ENCODE measurements at regions of chr17 and their contacts with region 1.

Region 1: GRCh38 chr17:58658804-58659713 is 32.8 kb downstream of the TEX14 start:
- DNase-seq: peak; percentile 41 to 79
- ATAC-seq: peak; percentile 96 to 99
- H3K4me3 ChIP-seq: peak overlapping the region; percentile 55 to 66 (median 61)
- H3K27ac ChIP-seq: peak overlapping the region; percentile 65 to 80 (median 79)
- H3K4me1 ChIP-seq: no peaks in the 10 kb centered on the region
- H3K27me3 ChIP-seq: no peaks in the 10 kb centered on the region
- CTCF ChIP-seq: peak in 1 of 5 experiments; percentile 41
- POLR2A ChIP-seq: peak; percentile 94 to 98

Region 2: GRCh38 chr17:58249270-58250133 is 409.6 kb before region 1 on chr17:
- in situ Hi-C with region 1: no loop called
- intact Hi-C with region 1: no loop called
- DNase-seq: peak; percentile 29 to 39
- ATAC-seq: peak; percentile 74 to 89
- H3K4me3 ChIP-seq: peak overlapping the region; percentile 46 to 62 (median 50)
- H3K27ac ChIP-seq: no peak overlapping the region
- H3K4me1 ChIP-seq: peaks cover 0 to 10% of the 10 kb centered on the region in 2 donors
- H3K27me3 ChIP-seq: peaks cover 9 to 16% (median 9%) of the 10 kb centered on the region in 3 donors
- CTCF ChIP-seq: peak; percentile 58 to 94 (median 86)
- POLR2A ChIP-seq: no peak

Region 3: GRCh38 chr17:58800240-58800908 is 141.3 kb after region 1 on chr17:
- in situ Hi-C with region 1: no loop called
- intact Hi-C with region 1: no loop called
- DNase-seq: no peak
- ATAC-seq: no peak
- H3K4me3 ChIP-seq: no peak overlapping the region
- H3K27ac ChIP-seq: no peak overlapping the region
- H3K4me1 ChIP-seq: no peaks in the 10 kb centered on the region
- H3K27me3 ChIP-seq: no peaks in the 10 kb centered on the region
- CTCF ChIP-seq: no peak
- POLR2A ChIP-seq: no peak

Region 4: DNA sequence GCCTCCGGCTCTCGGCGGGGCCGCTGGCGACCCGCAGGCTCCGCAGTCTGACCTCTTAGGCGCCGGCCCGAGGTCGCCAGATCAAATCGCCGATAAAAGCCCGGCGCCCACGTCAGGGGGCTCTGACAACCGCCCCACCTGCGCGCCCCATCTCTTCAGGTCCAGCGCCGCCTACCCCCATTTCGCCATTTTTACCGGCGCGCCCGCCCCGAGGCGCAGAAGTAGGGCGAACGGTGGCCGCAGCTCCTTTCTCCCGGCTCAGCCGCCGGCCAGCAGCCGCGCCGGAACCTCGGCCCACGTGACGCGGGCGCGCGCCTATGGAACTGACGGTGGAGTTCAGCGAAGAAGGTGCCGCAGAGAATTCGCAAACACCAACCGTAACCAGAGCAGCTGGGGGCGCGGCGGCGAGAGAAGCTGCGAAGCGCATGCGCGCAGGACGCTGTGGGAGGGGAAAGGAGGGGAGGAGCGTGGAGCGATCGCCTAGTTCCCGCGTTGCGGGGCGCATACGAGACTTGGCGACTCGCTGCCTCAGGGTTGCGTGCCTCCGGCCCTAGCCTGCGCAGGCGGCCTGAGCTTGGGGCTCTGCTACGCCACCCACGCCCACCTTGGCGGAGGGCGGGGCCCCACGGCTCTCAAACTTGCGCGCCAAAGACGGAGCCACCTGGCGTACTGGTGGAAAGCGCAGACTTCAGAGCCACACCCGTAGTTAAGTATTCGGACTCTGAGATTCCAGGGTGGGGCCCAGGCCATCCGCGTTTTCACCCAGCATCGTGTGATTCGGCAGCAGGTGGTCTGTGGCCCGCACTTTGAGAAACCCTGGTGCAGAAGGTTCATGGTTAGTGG is 447.6 kb after region 1 on chr17 and contains the start of gene TRIM37:
- in situ Hi-C with region 1: no loop called
- intact Hi-C with region 1: loop called (anchors 5 kb)
- DNase-seq: peak; percentile 96 to 97
- ATAC-seq: peak; percentile 98 to 99
- H3K4me3 ChIP-seq: peak within 1 kb of the TSS; percentile 67 to 99 (median 91)
- H3K27ac ChIP-seq: peak within 1 kb of the TSS; percentile 84 to 99 (median 92)
- H3K4me1 ChIP-seq: peaks cover 7 to 25% of the 10 kb centered on the region in 2 donors
- H3K27me3 ChIP-seq: no peaks in the 10 kb centered on the region
- CTCF ChIP-seq: peak in 2 of 5 experiments; percentile 6 to 27
- POLR2A ChIP-seq: peak; percentile 88 to 89
- total RNA-seq, gene TRIM37: 16.1 to 17.5 (median 16.3) TPM

Measured in gastrocnemius medialis (tissue), 4 donors.